MCF 10A (cell line): ENCODE measurements at regions of chr2 and their contacts with region 1.

Region 1: GRCh38 chr2:64359892-64360657 is 93.9 kb upstream of the LGALSL start:
- DNase-seq: peak; percentile 97
- H3K4me3 Mint-ChIP-seq: peak overlapping the region; percentile 48
- H3K27ac Mint-ChIP-seq: peak overlapping the region; percentile 95
- H3K4me1 Mint-ChIP-seq: peaks cover 44% of the 10 kb centered on the region
- H3K27me3 Mint-ChIP-seq: no peaks in the 10 kb centered on the region
- CTCF ChIP-seq: no peak

Region 2: GRCh38 chr2:64371727-64372126 is 11.7 kb after region 1 on chr2:
- CTCF ChIA-PET with region 1: interaction called, 3 read pairs
- POLR2A ChIA-PET with region 1: interaction called, 10 read pairs
- intact Hi-C with region 1: no loop called
- DNase-seq: peak; percentile 53
- H3K4me3 Mint-ChIP-seq: no peak overlapping the region
- H3K27ac Mint-ChIP-seq: no peak overlapping the region
- H3K4me1 Mint-ChIP-seq: peaks cover 5% of the 10 kb centered on the region
- H3K27me3 Mint-ChIP-seq: no peaks in the 10 kb centered on the region
- CTCF ChIP-seq: no peak